ENCODE measurements at regions of chr1 and their contacts with region 1.

Region 1: GRCh38 chr1:154558575-154559465 is at the start of gene UBE2Q1:
- DNase-seq: peak; percentile 92 to 99
- ATAC-seq: peak; percentile 90 to 94
- H3K4me3 ChIP-seq: peak within 1 kb of the TSS; percentile 85
- H3K27ac ChIP-seq: peak within 1 kb of the TSS; percentile 93 to 96
- H3K4me1 ChIP-seq: peaks cover 16% of the 10 kb centered on the region
- CTCF ChIP-seq: no peak
- EP300 ChIP-seq: no peak
- POLR2A ChIP-seq: peak; percentile 73
- RAD21 ChIP-seq: no peak
- polyA plus RNA-seq, gene UBE2Q1: 17.6 and 26.6 TPM in 2 replicates

Region 2: GRCh38 chr1:154546264-154547063 is 12.4 kb before region 1 on chr1:
- CTCF ChIA-PET with region 1: interaction called, 24 read pairs
- POLR2A ChIA-PET with region 1: no interaction called
- DNase-seq: peak; percentile 81 to 90
- ATAC-seq: peak; percentile 91 to 95
- H3K4me3 ChIP-seq: no peak overlapping the region
- H3K27ac ChIP-seq: no peak overlapping the region
- H3K4me1 ChIP-seq: peaks cover 21% of the 10 kb centered on the region
- CTCF ChIP-seq: peak; percentile 79
- EP300 ChIP-seq: no peak
- POLR2A ChIP-seq: no peak
- RAD21 ChIP-seq: peak; percentile 85 to 88

Region 3: GRCh38 chr1:154574716-154575115 is 15.9 kb after region 1 on chr1:
- CTCF ChIA-PET with region 1: interaction called, 15 read pairs
- POLR2A ChIA-PET with region 1: no interaction called
- DNase-seq: no peak
- ATAC-seq: peak; percentile 11 to 22; a peak in 3 of 6 replicates
- H3K4me3 ChIP-seq: no peak overlapping the region
- H3K27ac ChIP-seq: no peak overlapping the region
- H3K4me1 ChIP-seq: no peaks in the 10 kb centered on the region
- CTCF ChIP-seq: no peak
- EP300 ChIP-seq: no peak
- POLR2A ChIP-seq: no peak
- RAD21 ChIP-seq: no peak

Region 4: GRCh38 chr1:154589780-154590179 is 31.0 kb after region 1 on chr1:
- CTCF ChIA-PET with region 1: interaction called, 13 read pairs
- POLR2A ChIA-PET with region 1: interaction called, 3 read pairs
- DNase-seq: no peak
- ATAC-seq: no peak
- H3K4me3 ChIP-seq: no peak overlapping the region
- H3K27ac ChIP-seq: no peak overlapping the region
- H3K4me1 ChIP-seq: no peaks in the 10 kb centered on the region
- CTCF ChIP-seq: no peak
- EP300 ChIP-seq: no peak
- POLR2A ChIP-seq: no peak
- RAD21 ChIP-seq: no peak

Region 5: GRCh38 chr1:154605534-154605933 is 46.7 kb after region 1 on chr1:
- CTCF ChIA-PET with region 1: interaction called, 12 read pairs
- POLR2A ChIA-PET with region 1: no interaction called
- DNase-seq: no peak
- ATAC-seq: no peak
- H3K4me3 ChIP-seq: no peak overlapping the region
- H3K27ac ChIP-seq: no peak overlapping the region
- H3K4me1 ChIP-seq: peaks cover 29% of the 10 kb centered on the region
- CTCF ChIP-seq: no peak
- EP300 ChIP-seq: no peak
- POLR2A ChIP-seq: no peak
- RAD21 ChIP-seq: no peak

Region 6: GRCh38 chr1:154943649-154944400 is 385.0 kb after region 1 on chr1:
- CTCF ChIA-PET with region 1: interaction called, 10 read pairs
- POLR2A ChIA-PET with region 1: no interaction called
- DNase-seq: peak; percentile 42 to 70
- ATAC-seq: peak; percentile 71 to 85; a peak in 5 of 6 replicates
- H3K4me3 ChIP-seq: no peak overlapping the region
- H3K27ac ChIP-seq: no peak overlapping the region
- H3K4me1 ChIP-seq: no peaks in the 10 kb centered on the region
- CTCF ChIP-seq: peak; percentile 85
- EP300 ChIP-seq: no peak
- POLR2A ChIP-seq: no peak
- RAD21 ChIP-seq: peak; percentile 81 to 84

Measured in A549 (cell line).